OCI-LY7 (cell line): ENCODE measurements at regions of chr13 and their contacts with region 1.

Region 1: DNA sequence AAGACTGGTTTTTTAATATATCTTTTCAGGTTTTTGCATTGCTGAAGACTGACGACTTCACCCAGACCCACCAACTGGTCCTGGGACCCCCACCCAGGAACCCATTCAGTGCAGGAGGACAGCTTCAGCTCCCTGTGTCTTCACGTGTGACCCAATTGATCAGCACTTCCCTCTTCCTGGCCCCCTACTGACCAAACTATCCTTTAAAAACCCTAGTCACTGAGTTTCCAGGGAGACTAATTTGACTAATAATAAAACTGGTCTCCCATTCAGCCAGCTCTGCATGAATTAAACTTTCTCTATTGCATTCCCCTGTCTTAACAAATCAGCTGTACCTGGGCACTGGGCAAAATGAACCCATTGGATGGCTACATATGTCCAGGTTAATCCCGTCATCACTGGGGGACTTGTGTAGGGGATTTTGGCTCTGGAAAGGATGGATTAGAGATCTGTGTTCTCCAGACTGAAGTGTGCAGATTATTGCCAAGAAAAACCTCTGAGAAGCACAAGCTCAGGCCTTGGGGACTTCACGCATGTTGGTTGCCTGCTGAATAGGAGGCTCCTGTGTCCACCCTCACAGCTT is 16.3 kb upstream of the PARP4 start:
- DNase-seq: no peak
- H3K4me3 ChIP-seq: no peak overlapping the region
- H3K27ac ChIP-seq: no peak overlapping the region
- H3K4me1 ChIP-seq: no peaks in the 10 kb centered on the region
- CTCF ChIP-seq: no peak

Region 2: DNA sequence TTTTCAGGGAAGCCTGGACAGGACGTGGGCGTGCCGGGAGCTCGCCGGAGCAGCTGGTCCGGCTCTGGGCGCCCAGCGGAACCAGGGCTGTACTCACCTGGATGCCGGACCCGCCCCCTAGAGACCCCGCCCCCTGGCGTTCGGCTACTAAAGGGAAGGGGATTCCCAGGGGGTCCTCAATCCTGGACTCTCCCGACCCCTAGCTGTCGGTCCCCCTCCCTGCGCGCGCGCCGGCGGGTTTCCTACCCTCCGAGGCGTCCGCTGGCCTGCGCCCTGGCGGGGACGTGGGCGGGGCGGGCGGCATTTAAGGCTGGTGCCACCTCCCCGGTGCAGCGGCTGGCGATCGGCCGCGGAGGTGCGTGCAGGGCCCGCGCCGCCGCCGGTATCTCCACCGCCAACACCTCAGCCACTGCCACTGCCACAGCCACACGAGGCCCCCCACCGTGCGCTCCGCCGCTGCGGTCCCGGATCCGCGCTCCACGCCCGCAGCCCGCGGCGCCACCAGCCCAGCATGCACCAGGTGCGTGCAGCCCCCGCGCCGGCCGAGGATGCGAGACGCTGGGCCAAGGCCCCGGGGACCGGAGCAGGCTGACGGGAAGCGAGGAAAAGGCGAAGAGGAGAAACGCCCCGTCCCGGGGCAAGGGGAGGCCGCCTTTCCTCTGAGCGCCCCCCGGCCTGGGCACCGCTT is 151.5 kb after region 1 on chr13 and contains the start of gene ATP12A:
- CTCF ChIA-PET with region 1: no interaction called
- POLR2A ChIA-PET with region 1: no interaction called
- intact Hi-C with region 1: no loop called
- DNase-seq: no peak
- H3K4me3 ChIP-seq: peak within 1 kb of the TSS; percentile 63
- H3K27ac ChIP-seq: no peak within 1 kb of the TSS
- H3K4me1 ChIP-seq: peaks cover 30% of the 10 kb centered on the region
- CTCF ChIP-seq: peak; percentile 35
- total RNA-seq, gene ATP12A: not detected in 2 replicates

Region 3: DNA sequence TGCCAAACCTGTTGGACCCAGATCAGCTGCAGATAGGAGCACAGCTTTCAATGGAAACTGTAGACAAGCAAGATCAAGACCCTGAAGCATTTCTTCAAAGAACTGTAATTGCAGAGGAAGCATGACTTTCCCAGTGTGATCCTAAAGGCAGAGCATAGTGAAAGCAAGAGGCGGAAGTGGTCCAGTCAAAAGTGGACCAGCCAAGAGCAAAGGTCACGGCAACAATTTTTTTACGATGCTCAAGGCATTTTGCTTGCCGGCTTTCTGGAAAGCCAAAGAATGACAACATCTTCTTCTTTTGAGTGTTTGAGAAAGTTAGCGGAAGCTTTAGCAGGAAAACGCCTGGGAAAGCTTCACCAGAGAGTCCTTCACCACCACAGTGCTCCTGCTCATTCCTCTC is 346.7 kb after region 1 on chr13:
- CTCF ChIA-PET with region 1: no interaction called
- POLR2A ChIA-PET with region 1: no interaction called
- intact Hi-C with region 1: loop called (anchors 10 kb)
- DNase-seq: no peak
- H3K4me3 ChIP-seq: no peak overlapping the region
- H3K27ac ChIP-seq: no peak overlapping the region
- H3K4me1 ChIP-seq: no peaks in the 10 kb centered on the region
- CTCF ChIP-seq: no peak

Region 4: GRCh38 chr13:25384752-25385441 is 856.0 kb after region 1 on chr13:
- CTCF ChIA-PET with region 1: no interaction called
- POLR2A ChIA-PET with region 1: no interaction called
- intact Hi-C with region 1: no loop called
- DNase-seq: no peak
- H3K4me3 ChIP-seq: no peak overlapping the region
- H3K27ac ChIP-seq: no peak overlapping the region
- H3K4me1 ChIP-seq: no peaks in the 10 kb centered on the region
- CTCF ChIP-seq: no peak